ENCODE measurements at regions of chr11 and their contacts with region 1.

Region 1: DNA sequence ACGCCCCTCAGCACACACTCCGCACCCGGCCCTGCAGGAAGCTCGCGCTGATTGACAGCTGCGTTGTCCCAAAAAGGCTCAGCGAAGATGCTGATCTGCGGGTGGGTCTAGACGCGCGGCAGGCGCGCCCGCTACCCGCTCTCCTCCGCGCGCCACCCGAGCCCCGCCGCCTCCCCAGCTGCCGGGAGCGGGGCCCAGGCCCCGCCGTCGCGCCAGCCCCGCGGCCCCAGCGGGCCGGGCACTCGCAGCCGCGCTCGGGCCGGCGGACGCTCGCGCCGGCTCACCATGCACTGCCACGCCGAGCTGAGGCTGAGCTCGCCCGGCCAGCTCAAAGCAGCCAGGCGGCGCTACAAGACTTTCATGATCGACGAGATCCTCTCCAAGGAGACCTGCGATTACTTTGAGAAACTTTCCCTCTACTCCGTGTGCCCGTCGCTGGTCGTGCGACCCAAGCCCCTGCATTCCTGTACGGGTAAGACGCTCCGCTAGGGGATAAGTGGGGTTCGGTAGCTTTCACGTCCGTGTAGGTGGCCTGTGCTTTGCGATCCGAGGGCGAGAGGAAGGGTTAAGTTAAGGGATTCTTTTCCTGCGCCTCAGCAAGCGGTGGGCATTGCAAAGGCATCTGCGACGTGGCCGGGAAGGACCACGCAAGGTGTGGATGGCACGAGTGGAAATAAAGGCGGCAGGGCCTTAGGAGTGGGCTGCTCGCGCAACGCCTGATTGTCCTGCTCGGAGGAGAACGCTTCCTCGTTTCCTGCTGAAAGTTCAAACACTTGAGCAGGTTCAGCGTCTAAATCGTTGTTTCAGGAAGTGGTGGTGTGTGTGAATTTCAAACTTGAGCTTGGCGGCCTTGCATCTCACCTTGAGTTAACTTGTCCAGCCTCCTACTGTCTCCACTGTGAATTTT is at the start of gene BARX2:
- DNase-seq: no peak
- H3K4me3 Mint-ChIP-seq: peak within 1 kb of the TSS; percentile 65
- H3K27ac Mint-ChIP-seq: peak within 1 kb of the TSS; percentile 89
- H3K4me1 Mint-ChIP-seq: peaks cover 11% of the 10 kb centered on the region
- H3K27me3 Mint-ChIP-seq: no peaks in the 10 kb centered on the region
- CTCF ChIP-seq: no peak
- total RNA-seq, gene BARX2: 41.6 and 42.9 TPM in 2 replicates

Region 2: GRCh38 chr11:129364143-129364654 is 11.8 kb before region 1 on chr11:
- CTCF ChIA-PET with region 1: interaction called, 19 read pairs
- intact Hi-C with region 1: loop called (anchors 2 kb)
- DNase-seq: peak; percentile 88
- H3K4me3 Mint-ChIP-seq: no peak overlapping the region
- H3K27ac Mint-ChIP-seq: no peak overlapping the region
- H3K4me1 Mint-ChIP-seq: peaks cover 24% of the 10 kb centered on the region
- H3K27me3 Mint-ChIP-seq: no peaks in the 10 kb centered on the region
- CTCF ChIP-seq: peak; percentile 92

Region 3: DNA sequence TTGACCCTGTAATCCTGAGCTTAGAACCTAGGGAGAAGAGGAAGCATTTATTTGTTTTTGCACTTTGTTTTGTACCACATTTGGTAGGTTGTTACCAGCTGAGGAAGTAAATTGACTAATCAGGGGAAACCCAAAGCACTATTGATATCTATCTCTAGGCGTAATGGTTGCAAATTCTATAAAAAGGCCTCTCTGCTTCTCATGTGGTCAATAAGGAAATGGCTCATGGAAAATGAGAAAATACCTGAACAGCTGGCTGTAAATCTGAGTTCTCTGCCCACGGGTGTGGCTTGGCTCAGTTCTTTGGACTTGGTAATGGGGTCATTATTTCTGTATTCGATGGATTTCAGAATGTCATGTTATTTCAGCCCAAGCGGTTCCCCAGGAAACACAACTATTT is 42.0 kb after region 1 on chr11:
- CTCF ChIA-PET with region 1: interaction called, 3 read pairs
- intact Hi-C with region 1: loop called (anchors 2 kb)
- DNase-seq: peak; percentile 42
- H3K4me3 Mint-ChIP-seq: peak overlapping the region; percentile 19
- H3K27ac Mint-ChIP-seq: peak overlapping the region; percentile 84
- H3K4me1 Mint-ChIP-seq: peaks cover 69% of the 10 kb centered on the region
- H3K27me3 Mint-ChIP-seq: no peaks in the 10 kb centered on the region
- CTCF ChIP-seq: no peak

Region 4: DNA sequence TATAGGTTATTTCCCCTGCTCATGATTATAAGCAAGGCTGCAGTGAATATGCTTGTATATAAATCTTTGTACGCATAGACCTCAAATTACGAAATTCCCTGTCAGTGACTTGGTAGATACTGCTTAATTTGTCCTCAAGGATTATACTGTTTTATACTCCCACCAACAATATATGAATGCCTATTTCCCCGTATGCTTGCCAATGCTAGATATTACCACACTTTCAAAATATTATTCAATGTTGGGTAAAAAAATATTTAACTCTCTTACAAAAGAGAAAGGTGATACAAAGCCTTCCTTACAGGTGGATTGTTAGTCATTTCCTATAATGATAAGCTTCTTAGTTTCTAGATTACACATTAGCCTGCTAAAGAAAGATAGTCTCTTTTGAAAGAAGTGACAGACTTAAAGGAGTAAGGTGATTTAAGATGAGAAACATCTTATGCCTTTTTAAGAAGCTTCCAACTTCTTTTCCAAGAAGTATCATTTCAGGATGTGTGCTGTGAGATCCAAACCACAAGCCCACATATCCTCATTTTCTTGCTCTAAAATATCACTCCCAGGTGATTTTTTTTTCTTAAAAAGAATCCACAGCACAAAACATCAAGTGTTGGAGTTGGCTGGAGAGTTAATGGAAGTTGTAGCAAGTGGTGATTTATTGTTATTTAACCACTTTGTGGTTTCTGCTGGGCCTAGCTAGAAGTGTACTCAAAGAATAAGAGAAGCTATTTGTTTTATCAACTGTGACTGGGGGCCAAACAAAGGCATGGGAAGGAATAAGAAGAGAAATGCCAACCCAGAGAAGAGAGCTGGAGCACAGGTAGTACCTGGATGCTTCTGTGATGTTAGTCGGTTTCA is 58.9 kb after region 1 on chr11:
- CTCF ChIA-PET with region 1: interaction called, 6 read pairs
- intact Hi-C with region 1: loop called (anchors 2 kb)
- DNase-seq: no peak
- H3K4me3 Mint-ChIP-seq: peak overlapping the region; percentile 54
- H3K27ac Mint-ChIP-seq: peak overlapping the region; percentile 99
- H3K4me1 Mint-ChIP-seq: peaks cover 61% of the 10 kb centered on the region
- H3K27me3 Mint-ChIP-seq: no peaks in the 10 kb centered on the region
- CTCF ChIP-seq: no peak

Region 5: GRCh38 chr11:129652828-129653227 is 276.8 kb after region 1 on chr11:
- CTCF ChIA-PET with region 1: no interaction called
- intact Hi-C with region 1: loop called (anchors 5 kb)
- DNase-seq: no peak
- H3K4me3 Mint-ChIP-seq: no peak overlapping the region
- H3K27ac Mint-ChIP-seq: no peak overlapping the region
- H3K4me1 Mint-ChIP-seq: no peaks in the 10 kb centered on the region
- H3K27me3 Mint-ChIP-seq: no peaks in the 10 kb centered on the region
- CTCF ChIP-seq: no peak

Region 6: GRCh38 chr11:129695575-129696308 is 319.7 kb after region 1 on chr11:
- CTCF ChIA-PET with region 1: interaction called, 10 read pairs
- intact Hi-C with region 1: no loop called
- DNase-seq: peak; percentile 81
- H3K4me3 Mint-ChIP-seq: peak overlapping the region; percentile 58
- H3K27ac Mint-ChIP-seq: no peak overlapping the region
- H3K4me1 Mint-ChIP-seq: peaks cover 12% of the 10 kb centered on the region
- H3K27me3 Mint-ChIP-seq: peaks cover 15% of the 10 kb centered on the region
- CTCF ChIP-seq: peak; percentile 78

Region 7: GRCh38 chr11:129750349-129751292 is 374.6 kb after region 1 on chr11:
- CTCF ChIA-PET with region 1: interaction called, 10 read pairs
- intact Hi-C with region 1: no loop called
- DNase-seq: peak; percentile 81
- H3K4me3 Mint-ChIP-seq: peak overlapping the region; percentile 41
- H3K27ac Mint-ChIP-seq: no peak overlapping the region
- H3K4me1 Mint-ChIP-seq: no peaks in the 10 kb centered on the region
- H3K27me3 Mint-ChIP-seq: no peaks in the 10 kb centered on the region
- CTCF ChIP-seq: peak; percentile 98